Posterior cingulate gyrus (tissue), 11 donors: ENCODE measurements at regions of chr10 and their contacts with region 1.

Region 1: GRCh38 chr10:99711129-99711719 is 20.7 kb downstream of the COX15 start:
- DNase-seq: peak in 1 of 10 donors; percentile 20

Region 2: GRCh38 chr10:99395750-99396445 is 315.3 kb before region 1 on chr10:
- intact Hi-C with region 1: loop called (anchors 5 kb)
- DNase-seq: peak in 2 of 10 donors; percentile 13 to 27

Region 3: DNA sequence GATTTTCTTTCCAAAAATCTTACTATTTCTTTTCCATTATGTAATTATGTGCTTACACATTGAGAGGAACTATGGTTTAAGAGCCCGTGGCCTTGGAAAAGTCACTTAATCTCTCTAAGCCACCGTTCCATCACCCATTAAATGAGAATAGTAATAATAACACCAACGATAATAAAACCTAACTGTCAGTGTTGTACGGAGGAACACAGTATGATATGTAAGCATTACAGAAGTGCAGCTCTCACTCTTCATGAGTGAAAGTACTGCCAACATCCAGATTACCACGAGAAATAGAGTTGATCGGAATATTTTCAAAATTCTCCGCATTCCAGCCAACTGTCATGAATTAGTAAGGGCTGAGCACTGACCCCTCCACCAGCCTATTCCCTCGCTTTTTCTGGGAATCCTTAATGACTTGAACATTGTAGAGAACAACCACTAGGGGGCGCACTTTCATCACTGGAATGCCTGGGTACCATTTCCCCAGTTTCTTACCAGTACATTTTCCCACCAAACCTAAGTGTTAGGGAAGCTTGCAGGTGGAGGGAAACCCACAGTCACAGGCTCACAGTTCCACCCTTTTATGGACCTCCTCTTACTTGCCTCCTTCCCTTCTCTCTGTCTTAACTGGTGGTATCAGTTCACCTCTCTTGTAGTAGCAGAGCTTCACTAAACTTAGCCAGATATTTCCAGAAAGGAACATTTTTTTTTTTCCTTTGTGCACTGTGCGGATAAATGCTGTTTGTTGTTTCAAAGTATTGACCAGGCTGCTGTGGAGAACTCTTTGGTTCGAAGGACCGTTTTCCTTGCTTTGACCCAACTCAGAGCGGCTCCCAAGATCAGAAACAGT is 150.7 kb before region 1 on chr10:
- intact Hi-C with region 1: loop called (anchors 5 kb)
- DNase-seq: peak in 4 of 10 donors; percentile 38 to 60 (median 44)

Region 4: DNA sequence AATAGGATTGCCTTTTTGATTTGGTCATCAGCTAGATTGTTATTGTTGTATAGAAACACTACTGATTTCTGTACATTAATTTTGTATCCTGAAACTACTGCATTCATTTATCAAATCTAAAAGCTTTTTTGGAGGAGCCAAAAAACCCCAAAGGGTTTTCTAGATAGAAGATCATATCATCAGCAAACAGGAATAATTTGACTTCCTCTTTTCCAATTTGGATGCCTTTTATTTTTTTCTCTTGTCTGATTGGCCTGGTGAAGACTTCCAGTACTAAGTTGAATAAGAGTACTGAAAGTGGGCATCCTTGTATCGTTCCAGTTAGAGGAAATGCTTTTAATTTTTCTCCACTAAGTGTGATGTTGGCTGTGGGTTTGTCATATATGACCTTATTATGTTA is 62.5 kb before region 1 on chr10:
- intact Hi-C with region 1: no loop called
- DNase-seq: no peak